Activated CD4-positive, alpha-beta T cell treated with anti-CD3 and anti-CD28 coated beads, Interleukin-2, amount 10 ng/mL, durations not matched to agents 7 days and 5 days (primary cell): ENCODE measurements at regions of chr2 and their contacts with region 1.

Region 1: GRCh38 chr2:127591221-127591923 is 54.6 kb upstream of the GPR17 start:
- DNase-seq: peak; percentile 73
- H3K4me3 Mint-ChIP-seq: no peak overlapping the region
- H3K27ac Mint-ChIP-seq: no peak overlapping the region
- H3K4me1 Mint-ChIP-seq: peaks cover 3% of the 10 kb centered on the region
- H3K27me3 Mint-ChIP-seq: peaks cover 3% of the 10 kb centered on the region

Region 2: GRCh38 chr2:127453392-127454171 is 137.8 kb before region 1 on chr2:
- CTCF ChIA-PET with region 1: no interaction called
- POLR2A ChIA-PET with region 1: no interaction called
- DNase-seq: no peak
- H3K4me3 Mint-ChIP-seq: no peak overlapping the region
- H3K27ac Mint-ChIP-seq: peak overlapping the region; percentile 43
- H3K4me1 Mint-ChIP-seq: peaks cover 4% of the 10 kb centered on the region
- H3K27me3 Mint-ChIP-seq: peaks cover under 1% of the 10 kb centered on the region

Region 3: GRCh38 chr2:127576433-127577207 is 14.8 kb before region 1 on chr2:
- CTCF ChIA-PET with region 1: interaction called, 11 read pairs
- POLR2A ChIA-PET with region 1: no interaction called
- DNase-seq: peak; percentile 3
- H3K4me3 Mint-ChIP-seq: no peak overlapping the region
- H3K27ac Mint-ChIP-seq: peak overlapping the region; percentile 81
- H3K4me1 Mint-ChIP-seq: peaks cover 22% of the 10 kb centered on the region
- H3K27me3 Mint-ChIP-seq: peaks cover 11% of the 10 kb centered on the region

Region 4: DNA sequence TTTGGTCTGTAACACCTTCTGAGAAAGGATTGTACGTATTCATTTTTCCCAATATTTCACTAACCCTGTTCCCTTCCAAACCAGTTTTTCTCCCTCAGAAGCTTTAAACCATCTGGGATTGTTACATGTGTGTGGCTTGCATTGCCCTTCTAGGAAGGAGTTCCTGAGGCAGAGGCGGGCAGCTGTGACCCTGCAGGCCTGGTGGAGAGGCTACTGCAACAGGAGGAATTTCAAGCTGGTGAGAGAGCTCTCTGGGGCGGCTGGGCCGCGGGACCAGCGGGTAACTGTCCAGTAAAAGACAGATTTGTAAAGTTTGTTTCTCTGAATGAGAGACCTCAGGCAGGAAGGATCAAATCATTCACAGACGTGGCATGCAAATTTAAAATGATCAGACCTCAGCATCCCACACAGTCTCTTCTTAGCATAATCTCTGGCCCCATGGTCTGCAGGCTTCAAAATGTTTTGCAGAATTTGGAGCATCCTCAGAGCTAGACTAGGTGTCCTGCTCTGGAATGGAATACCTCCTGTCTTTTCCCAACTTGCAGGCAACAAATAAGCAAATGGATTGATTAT is 14.4 kb after region 1 on chr2:
- CTCF ChIA-PET with region 1: interaction called, 12 read pairs
- POLR2A ChIA-PET with region 1: no interaction called
- DNase-seq: no peak
- H3K4me3 Mint-ChIP-seq: no peak overlapping the region
- H3K27ac Mint-ChIP-seq: no peak overlapping the region
- H3K4me1 Mint-ChIP-seq: peaks cover 8% of the 10 kb centered on the region
- H3K27me3 Mint-ChIP-seq: no peaks in the 10 kb centered on the region

Region 5: DNA sequence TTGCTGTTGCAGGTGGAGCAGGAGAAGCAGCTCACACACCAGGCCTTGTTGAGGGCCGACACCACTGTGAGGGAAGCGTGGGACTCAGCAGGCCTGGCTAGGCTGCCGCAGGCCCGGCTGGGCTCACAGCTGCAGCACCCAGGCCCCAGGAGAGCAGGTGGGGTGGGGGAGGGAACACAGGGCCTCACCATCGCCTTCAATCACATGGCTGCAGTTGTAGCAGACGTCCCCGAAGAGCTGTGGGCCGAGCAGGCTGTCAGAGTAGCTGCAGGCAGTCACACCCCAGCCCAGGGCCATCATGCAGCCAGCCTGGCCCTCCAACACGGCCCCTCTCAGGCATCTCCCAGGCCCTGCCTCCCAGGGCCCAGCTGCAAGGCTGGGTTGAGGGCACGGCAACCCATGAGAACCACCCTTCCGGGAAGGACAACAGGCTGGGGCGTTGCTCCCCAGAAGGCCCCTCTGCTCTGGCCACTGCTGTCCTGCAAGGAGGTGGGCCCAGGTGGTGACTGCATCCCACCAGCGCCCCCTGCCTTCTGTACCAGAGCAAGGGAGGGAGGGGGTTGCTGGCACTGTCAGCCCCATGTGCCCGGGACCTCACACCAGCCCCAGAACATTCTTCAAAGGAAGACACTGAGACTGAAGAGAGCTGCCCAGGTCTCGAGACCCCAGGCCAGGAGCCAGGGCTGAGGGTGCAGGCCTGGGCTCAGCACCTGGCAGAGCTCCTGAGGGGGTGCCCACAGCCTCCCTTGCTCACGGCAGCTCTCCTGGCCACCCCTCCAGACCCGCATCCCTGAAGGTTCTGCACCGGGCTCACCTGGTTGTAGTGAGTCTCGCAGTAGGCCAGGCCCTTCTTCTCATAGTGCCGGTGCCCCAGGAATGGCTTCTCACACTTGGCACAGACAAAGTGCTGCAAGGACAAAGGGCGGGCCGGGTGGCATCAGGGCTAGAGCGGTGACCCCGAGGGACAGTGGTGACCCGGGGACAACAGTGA is 49.0 kb after region 1 on chr2:
- CTCF ChIA-PET with region 1: interaction called, 28 read pairs
- POLR2A ChIA-PET with region 1: no interaction called
- DNase-seq: peak; percentile 46
- H3K4me3 Mint-ChIP-seq: peak overlapping the region; percentile 72
- H3K27ac Mint-ChIP-seq: peak overlapping the region; percentile 89
- H3K4me1 Mint-ChIP-seq: peaks cover 55% of the 10 kb centered on the region
- H3K27me3 Mint-ChIP-seq: no peaks in the 10 kb centered on the region

Region 6: DNA sequence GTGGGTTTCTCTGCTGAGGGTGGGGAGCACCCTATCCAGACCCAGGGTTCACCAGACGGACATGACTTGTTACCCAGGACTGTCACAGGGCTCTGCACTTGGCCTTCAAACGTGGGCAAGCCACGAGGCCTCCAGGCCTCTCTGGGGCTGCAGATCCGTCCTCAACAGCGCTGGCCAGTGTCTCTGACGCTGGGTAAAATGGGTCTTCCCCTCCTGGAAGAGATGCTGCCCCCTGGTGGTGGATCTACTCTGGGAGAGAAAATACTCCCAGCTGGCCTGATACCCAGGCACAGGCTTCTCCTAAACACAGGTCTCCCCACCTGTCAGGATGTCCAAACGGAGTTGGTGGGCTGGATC is 58.3 kb after region 1 on chr2:
- CTCF ChIA-PET with region 1: interaction called, 50 read pairs
- POLR2A ChIA-PET with region 1: no interaction called
- DNase-seq: peak; percentile 91
- H3K4me3 Mint-ChIP-seq: no peak overlapping the region
- H3K27ac Mint-ChIP-seq: peak overlapping the region; percentile 76
- H3K4me1 Mint-ChIP-seq: peaks cover 24% of the 10 kb centered on the region
- H3K27me3 Mint-ChIP-seq: no peaks in the 10 kb centered on the region

Region 7: GRCh38 chr2:127721311-127721977 is 130.1 kb after region 1 on chr2:
- CTCF ChIA-PET with region 1: no interaction called
- POLR2A ChIA-PET with region 1: no interaction called
- DNase-seq: no peak
- H3K4me3 Mint-ChIP-seq: no peak overlapping the region
- H3K27ac Mint-ChIP-seq: no peak overlapping the region
- H3K4me1 Mint-ChIP-seq: no peaks in the 10 kb centered on the region
- H3K27me3 Mint-ChIP-seq: no peaks in the 10 kb centered on the region